Activated naive CD4-positive, alpha-beta T cell treated with anti-CD3 and anti-CD28 coated beads for 36 hours (primary cell): ENCODE measurements at regions of chr16 and their contacts with region 1.

Region 1: DNA sequence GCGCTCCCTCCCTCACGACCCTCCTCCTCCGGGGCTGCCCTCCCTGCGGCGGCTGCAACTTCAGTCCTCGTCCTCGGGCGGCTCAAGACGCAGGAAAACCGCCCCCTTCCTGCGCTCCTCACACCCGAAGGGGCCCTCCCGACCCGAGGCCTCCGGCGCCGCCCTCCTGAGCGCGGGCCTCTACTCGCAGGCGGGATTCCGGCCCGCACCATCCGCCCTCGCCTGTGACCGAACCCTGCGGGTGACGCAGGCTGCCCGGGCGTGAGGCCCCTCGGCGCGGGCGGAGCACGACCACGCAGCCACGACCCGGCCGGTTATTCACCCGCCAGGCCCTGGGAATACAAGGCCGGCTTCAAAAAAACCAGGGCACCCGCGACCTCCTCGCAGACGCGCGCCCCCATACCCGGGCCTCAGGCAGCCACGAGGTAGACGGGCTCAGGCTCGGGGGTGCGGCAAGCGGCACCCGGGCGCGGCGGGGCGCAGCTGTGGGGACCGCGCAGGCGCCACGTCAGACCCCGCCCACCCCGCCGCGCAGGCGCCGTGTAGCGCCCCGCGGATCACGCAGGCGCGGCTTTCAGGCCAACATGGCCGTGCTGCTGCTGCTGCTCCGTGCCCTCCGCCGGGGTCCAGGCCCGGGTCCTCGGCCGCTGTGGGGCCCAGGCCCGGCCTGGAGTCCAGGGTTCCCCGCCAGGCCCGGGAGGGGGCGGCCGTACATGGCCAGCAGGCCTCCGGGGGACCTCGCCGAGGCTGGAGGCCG is at the start of gene SPG7:
- DNase-seq: peak; percentile 86
- H3K4me3 Mint-ChIP-seq: peak within 1 kb of the TSS; percentile 88
- H3K27ac Mint-ChIP-seq: peak within 1 kb of the TSS; percentile 89
- H3K4me1 Mint-ChIP-seq: peaks cover 31% of the 10 kb centered on the region
- H3K27me3 Mint-ChIP-seq: no peaks in the 10 kb centered on the region
- total RNA-seq, gene SPG7: 62.4 to 67.7 TPM

Region 2: GRCh38 chr16:89093602-89094251 is 414.3 kb before region 1 on chr16 and contains the start of gene ACSF3:
- CTCF ChIA-PET with region 1: no interaction called
- intact Hi-C with region 1: loop called (anchors 10 kb)
- DNase-seq: peak; percentile 63
- H3K4me3 Mint-ChIP-seq: peak within 1 kb of the TSS; percentile 92
- H3K27ac Mint-ChIP-seq: peak within 1 kb of the TSS; percentile 92
- H3K4me1 Mint-ChIP-seq: peaks cover 47% of the 10 kb centered on the region
- H3K27me3 Mint-ChIP-seq: no peaks in the 10 kb centered on the region
- total RNA-seq, gene ACSF3: 26.1 to 26.7 TPM

Region 3: DNA sequence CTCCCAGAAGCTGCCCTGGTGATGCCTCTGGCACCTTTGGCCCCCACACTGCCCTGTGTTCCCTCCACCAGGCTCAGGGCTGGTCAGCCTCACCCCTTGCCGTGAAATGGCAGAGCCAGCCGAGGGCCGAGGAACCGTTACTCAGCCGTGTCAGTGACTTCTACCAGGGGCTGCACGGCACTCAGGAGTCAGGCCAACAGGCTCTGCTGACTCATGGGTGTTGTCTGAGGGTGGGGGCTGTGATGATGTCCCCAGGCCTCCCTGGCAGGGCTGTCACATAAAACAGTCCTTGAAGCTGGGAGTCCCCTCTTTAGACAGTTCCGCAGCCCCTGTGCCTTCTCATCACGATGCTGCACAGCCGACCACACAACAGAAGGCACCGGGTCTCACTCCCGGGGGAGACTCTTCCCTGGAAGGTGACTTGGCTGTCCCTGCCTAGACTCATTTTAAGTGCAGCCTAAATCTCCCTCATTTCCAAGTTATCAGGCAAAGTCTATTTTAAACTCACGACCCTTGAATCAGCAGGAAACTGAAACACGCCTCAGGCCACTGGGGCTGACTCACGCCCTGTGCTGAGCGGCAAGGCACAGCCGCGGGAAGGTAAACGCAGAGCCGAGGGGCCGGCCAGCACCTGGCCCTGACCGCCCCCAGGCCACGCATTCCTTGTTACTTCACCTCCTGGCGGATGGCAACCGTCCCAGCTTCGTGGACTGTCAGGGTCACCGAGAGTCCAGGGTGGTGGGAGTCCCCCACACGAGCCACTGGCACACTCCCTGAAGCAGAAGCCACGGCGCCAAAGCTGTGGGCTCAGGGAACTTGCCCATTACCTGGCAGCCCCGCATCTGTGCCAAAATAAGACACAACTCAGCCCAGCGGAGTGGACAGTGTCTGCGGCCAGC is 187.9 kb before region 1 on chr16:
- CTCF ChIA-PET with region 1: interaction called, 15 read pairs
- intact Hi-C with region 1: loop called (anchors 2 kb)
- DNase-seq: peak; percentile 50
- H3K4me3 Mint-ChIP-seq: no peak overlapping the region
- H3K27ac Mint-ChIP-seq: peak overlapping the region; percentile 28
- H3K4me1 Mint-ChIP-seq: peaks cover 98% of the 10 kb centered on the region
- H3K27me3 Mint-ChIP-seq: no peaks in the 10 kb centered on the region

Region 4: GRCh38 chr16:89325861-89326471 is 182.0 kb before region 1 on chr16:
- CTCF ChIA-PET with region 1: no interaction called
- intact Hi-C with region 1: loop called (anchors 2 kb)
- DNase-seq: peak; percentile 44
- H3K4me3 Mint-ChIP-seq: no peak overlapping the region
- H3K27ac Mint-ChIP-seq: peak overlapping the region; percentile 46
- H3K4me1 Mint-ChIP-seq: peaks cover 89% of the 10 kb centered on the region
- H3K27me3 Mint-ChIP-seq: no peaks in the 10 kb centered on the region

Region 5: DNA sequence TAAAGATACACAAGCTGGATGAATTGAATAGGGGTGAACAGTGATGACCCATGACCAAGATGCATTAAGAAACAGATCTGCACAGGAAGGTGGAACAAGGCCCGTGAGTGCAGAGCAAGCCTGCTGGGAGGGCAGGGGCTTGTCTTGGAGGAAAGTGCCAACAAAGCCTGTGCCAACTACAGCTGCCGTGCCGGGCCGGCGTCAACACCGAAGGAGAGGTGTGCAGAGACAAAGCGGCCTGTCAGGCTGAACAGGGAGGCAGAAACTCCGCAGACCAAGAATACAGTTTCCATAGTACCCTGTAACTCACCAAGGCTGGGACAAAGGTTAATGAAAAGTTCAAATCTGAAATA is 64.3 kb before region 1 on chr16:
- CTCF ChIA-PET with region 1: no interaction called
- intact Hi-C with region 1: loop called (anchors 2 kb)
- DNase-seq: no peak
- H3K4me3 Mint-ChIP-seq: no peak overlapping the region
- H3K27ac Mint-ChIP-seq: no peak overlapping the region
- H3K4me1 Mint-ChIP-seq: peaks cover 95% of the 10 kb centered on the region
- H3K27me3 Mint-ChIP-seq: no peaks in the 10 kb centered on the region

Region 6: GRCh38 chr16:89490387-89491237 is 17.4 kb before region 1 on chr16 and contains the start of gene ANKRD11:
- CTCF ChIA-PET with region 1: no interaction called
- intact Hi-C with region 1: loop called (anchors 1 kb)
- DNase-seq: peak; percentile 99
- H3K4me3 Mint-ChIP-seq: peak within 1 kb of the TSS; percentile 96
- H3K27ac Mint-ChIP-seq: peak within 1 kb of the TSS; percentile 98
- H3K4me1 Mint-ChIP-seq: peaks cover 50% of the 10 kb centered on the region
- H3K27me3 Mint-ChIP-seq: no peaks in the 10 kb centered on the region
- total RNA-seq, gene ANKRD11: 174 to 177 TPM

Region 7: GRCh38 chr16:89530401-89531381 is 22.7 kb after region 1 on chr16:
- CTCF ChIA-PET with region 1: no interaction called
- intact Hi-C with region 1: no loop called
- DNase-seq: no peak
- H3K4me3 Mint-ChIP-seq: no peak overlapping the region
- H3K27ac Mint-ChIP-seq: no peak overlapping the region
- H3K4me1 Mint-ChIP-seq: peaks cover 21% of the 10 kb centered on the region
- H3K27me3 Mint-ChIP-seq: no peaks in the 10 kb centered on the region

Region 8: GRCh38 chr16:89560378-89561141 is 52.5 kb after region 1 on chr16 and contains the start of gene RPL13:
- CTCF ChIA-PET with region 1: no interaction called
- intact Hi-C with region 1: loop called (anchors 1 kb)
- DNase-seq: peak; percentile 96
- H3K4me3 Mint-ChIP-seq: peak within 1 kb of the TSS; percentile 97
- H3K27ac Mint-ChIP-seq: peak within 1 kb of the TSS; percentile 98
- H3K4me1 Mint-ChIP-seq: peaks cover 46% of the 10 kb centered on the region
- H3K27me3 Mint-ChIP-seq: no peaks in the 10 kb centered on the region
- total RNA-seq, gene RPL13: 3,875 to 3,899 TPM

Region 9: DNA sequence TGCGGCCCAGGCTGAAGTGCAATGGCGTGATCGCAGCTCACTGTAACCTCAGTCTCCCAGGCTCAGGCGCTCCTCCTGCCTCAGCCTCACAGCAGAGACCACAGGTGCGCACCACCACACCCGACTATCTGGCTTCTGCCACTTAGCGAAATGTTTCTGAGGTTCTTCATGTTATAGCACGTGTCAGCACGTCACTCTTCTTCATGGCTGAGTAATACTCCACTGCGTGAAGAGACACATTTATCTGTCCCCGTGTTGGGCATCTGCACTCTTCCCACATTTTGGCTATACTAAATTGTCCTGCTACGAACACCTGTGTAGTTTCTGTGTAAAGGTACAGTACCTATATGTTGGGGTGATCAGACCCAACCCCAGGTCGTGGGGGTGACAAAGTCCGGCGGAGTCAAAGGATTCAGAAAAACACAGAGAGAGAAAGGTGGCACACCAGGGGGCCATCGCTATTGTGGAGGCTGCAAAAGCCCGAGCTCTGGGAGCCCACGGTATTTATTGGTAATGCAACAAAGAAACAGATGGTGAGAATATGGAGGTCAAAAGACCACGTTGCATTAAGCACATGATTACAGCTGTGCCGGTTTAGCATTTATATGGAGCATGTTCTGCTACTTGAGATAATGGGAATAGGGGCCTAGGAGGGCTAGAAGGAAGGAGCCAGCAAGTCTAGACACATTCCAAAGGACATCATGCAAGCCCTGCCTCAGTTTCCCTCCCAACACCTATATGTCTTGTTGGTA is 104.6 kb after region 1 on chr16:
- CTCF ChIA-PET with region 1: no interaction called
- intact Hi-C with region 1: no loop called
- DNase-seq: no peak
- H3K4me3 Mint-ChIP-seq: no peak overlapping the region
- H3K27ac Mint-ChIP-seq: no peak overlapping the region
- H3K4me1 Mint-ChIP-seq: peaks cover 12% of the 10 kb centered on the region
- H3K27me3 Mint-ChIP-seq: no peaks in the 10 kb centered on the region